ENCODE measurements at regions of chr1 and their contacts with region 1.

Region 1: DNA sequence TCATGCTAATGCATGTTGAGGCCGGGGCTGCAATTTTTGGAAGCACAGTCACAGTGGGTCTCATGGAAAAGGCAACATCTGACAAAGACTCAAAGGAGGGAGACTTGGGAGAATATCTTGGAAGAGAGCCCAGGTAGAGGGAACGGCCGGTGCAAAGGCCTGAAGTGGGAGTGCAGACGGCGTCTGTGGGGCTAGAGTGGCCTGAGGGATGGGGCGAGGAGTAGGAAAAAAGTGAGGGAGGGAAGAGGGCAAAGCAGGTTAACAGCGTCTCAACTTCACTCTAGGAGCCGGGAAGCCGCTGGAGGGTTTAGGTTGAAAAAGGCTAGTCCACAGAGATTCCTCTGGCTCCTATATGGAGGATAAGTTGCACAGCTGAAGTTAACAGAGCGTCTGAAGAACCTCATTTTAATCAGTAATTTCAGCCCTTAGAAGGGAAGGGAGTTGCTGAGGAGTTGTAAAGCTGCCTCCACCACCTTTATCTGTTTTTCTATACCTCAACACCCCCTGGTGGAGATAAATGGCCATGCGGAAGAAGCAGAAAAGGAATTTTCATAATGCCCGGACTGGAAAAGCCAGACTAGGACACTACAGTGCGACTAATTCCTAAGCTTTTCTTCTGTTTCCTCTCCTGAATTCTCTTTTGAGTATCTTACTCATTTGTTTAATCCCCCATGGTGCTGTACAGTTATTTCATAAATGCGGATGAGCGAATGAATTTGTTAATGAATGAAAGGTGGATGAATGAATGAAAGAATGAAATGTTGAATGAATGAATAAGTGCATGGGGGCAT is 78.7 kb upstream of the ZNF281 start:
- DNase-seq: peak in 5 of 10 donors; percentile 7 to 61 (median 44)
- H3K4me3 ChIP-seq: peak overlapping the region in 28 of 59 donors; percentile 4 to 56 (median 30)
- H3K27ac ChIP-seq: no peak overlapping the region
- H3K27me3 ChIP-seq: peaks cover 0 to 12% (median 0%) of the 10 kb centered on the region in 45 donors
- CTCF ChIP-seq: peak; percentile 58 to 98 (median 90)

Region 2: DNA sequence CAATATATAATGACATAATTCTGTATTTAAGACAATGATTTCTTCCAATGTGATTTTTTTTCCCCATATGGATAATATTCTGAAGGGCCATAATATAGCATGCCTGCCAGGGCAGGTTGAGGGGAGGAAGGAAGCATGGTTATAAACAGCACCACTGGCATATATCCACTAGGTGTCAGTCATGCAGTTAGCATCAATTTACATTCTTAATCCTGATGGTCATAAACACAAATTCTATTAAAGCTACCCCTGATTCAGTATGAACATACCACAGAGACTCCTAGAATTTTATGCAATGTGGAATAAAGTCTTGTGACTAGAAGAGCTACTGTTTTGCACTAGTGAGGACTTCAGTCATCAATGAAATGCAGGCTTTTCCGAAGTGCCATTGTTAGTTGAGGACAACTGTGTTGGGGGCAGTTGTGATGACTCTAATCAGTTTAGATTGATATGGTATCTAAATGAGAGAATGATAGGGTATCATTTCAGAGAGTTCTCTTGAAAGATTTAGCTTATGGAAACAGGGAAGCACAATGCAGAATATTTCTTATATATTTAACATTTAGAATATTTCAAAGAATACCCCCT is 803.8 kb before region 1 on chr1:
- intact Hi-C with region 1: loop called (anchors 2 to 10 kb)
- DNase-seq: peak in 1 of 10 donors; percentile 14
- H3K4me3 ChIP-seq: no peak overlapping the region
- H3K27ac ChIP-seq: no peak overlapping the region
- H3K27me3 ChIP-seq: peaks cover 0 to 8% (median 0%) of the 10 kb centered on the region in 45 donors
- CTCF ChIP-seq: peak; percentile 57 to 89 (median 79)

Region 3: DNA sequence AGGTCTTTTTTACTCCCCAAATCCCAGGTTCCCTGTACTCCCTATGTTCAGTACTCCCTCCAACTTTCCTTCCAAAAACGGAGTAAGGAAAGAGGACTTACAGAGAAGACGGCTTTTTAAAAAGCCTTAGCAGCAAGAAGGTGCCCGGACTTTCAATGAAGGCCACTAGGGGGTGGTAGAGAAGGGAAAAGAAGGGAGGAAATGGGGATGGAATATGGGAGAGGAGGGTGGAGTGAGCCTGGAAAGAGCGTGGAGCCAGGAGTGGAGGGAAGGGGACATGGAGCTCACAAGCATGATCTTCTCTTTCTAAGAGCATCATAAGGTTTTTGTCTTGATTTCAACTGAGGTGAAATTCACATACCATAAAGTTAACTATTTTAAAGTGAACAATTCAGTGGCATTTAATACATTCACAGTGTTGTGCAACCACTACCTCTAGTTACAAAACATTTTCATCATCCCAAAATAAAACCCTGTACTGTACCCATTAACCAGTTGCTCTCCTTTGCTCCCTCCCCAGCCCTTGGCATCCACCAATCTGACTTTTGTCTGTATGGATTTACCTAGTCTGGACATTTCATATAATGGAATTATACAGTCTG is 208.7 kb before region 1 on chr1:
- intact Hi-C with region 1: loop called (anchors 1 to 2 kb)
- DNase-seq: no peak
- H3K4me3 ChIP-seq: no peak overlapping the region
- H3K27ac ChIP-seq: no peak overlapping the region
- H3K27me3 ChIP-seq: no peaks in the 10 kb centered on the region
- CTCF ChIP-seq: peak in 55 of 56 donors; percentile 30 to 87 (median 64)

Region 4: GRCh38 chr1:200364091-200364759 is 124.3 kb before region 1 on chr1:
- intact Hi-C with region 1: no loop called
- DNase-seq: no peak
- H3K4me3 ChIP-seq: no peak overlapping the region
- H3K27ac ChIP-seq: peak overlapping the region in 51 of 59 donors; percentile 6 to 96 (median 85)
- H3K27me3 ChIP-seq: no peaks in the 10 kb centered on the region
- CTCF ChIP-seq: no peak